Left cardiac atrium (tissue), 4 donors: ENCODE measurements at regions of chr4 and their contacts with region 1.

Region 1: GRCh38 chr4:185597532-185598188 is 62.4 kb upstream of the PDLIM3 start:
- DNase-seq: peak; percentile 82
- ATAC-seq: peak; percentile 60 to 66

Region 2: GRCh38 chr4:185425647-185426352 is 171.9 kb before region 1 on chr4 and contains the start of gene UFSP2:
- intact Hi-C with region 1: loop called in 1 of 2 experiments (anchors 10 kb)
- DNase-seq: peak; percentile 92
- ATAC-seq: peak; percentile 96 to 97
- total RNA-seq, gene UFSP2: 37.0 to 43.0 TPM

Region 3: DNA sequence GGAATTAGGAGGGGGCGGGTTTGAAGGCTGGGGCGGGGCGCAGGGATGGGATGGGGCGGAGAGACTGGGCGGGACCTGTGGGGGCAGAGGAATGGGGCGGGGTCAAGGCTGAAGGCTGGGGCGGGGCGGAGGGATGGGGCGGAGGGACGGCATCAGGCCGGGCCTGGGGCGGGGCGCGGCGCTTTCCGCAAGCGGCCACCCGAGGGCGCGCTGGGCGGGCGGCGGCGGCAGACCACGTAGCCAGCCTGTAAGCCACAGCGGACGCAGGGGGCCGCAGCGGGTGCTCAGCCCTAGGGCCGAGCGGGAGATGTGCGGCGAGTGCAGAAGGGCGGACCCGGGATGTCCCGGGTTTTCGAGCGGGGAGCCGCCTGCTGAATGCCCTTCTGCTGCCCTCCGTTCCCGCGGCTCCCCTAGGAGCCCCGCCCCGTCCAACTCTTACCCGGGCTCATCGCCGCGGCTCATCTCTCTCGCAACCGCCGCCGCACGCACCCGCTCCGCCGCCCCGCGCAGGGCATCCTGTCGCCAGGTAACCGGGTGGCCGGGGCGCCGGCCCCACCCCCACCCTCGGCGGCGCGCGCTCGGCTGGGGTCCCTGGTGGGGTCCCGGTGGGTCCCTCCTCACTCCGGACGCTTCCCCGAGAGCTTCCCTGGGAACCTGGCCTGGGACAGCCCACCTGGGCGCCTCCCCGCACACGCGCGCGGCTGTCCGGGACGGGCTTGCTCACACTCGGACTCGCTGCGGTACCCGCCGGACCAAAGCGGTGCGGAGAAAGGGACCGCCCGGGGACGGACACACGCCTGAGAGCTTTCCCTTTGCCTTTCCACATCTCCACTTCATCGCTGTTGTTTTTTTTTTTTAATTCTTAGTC is 126.2 kb before region 1 on chr4 and contains the start of gene CCDC110:
- intact Hi-C with region 1: loop called (anchors 5 kb)
- DNase-seq: peak; percentile 95
- ATAC-seq: peak; percentile 99
- total RNA-seq, gene CCDC110: 1.6 to 2.0 TPM

Region 4: DNA sequence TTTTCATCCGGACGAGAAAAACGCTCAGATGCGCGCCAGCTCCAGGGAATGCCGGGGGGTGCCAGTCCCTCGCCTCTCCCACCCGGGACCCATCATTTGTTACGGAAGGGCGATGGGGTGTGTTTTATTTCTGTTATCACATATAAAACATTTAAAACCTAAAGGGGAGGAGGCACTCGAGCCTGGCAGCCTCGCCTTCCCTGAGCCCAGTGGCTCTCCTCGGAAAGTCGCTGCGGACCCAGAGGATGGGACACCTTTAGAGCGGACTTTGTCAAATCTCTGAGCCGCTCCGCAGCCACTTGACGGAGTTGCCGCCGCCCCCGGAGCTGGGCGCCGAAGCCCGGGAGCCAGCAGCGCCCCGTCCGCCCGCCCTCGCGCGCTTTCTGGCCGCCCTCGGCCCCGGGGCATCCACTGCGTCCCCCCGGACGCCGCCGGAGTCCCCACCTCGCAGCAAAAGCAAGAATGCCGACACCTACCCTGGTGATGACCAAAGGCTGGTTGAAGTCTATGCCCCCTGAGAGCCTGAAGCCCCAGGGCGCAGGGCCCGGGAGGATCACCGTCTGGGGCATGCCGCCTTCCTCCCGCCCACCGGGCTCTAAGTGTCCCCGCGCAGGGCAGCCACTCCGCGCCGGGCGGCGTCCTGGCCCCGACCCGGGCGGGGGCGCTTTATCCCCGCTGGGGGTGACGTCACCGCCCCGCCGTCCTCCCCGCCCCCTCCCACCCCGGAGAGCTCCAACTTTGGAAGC is 62.6 kb before region 1 on chr4 and contains the start of gene PDLIM3:
- intact Hi-C with region 1: loop called (anchors 5 to 10 kb)
- DNase-seq: peak; percentile 86
- ATAC-seq: peak; percentile 88 to 90
- total RNA-seq, gene PDLIM3: 319 to 692 TPM

Region 5: DNA sequence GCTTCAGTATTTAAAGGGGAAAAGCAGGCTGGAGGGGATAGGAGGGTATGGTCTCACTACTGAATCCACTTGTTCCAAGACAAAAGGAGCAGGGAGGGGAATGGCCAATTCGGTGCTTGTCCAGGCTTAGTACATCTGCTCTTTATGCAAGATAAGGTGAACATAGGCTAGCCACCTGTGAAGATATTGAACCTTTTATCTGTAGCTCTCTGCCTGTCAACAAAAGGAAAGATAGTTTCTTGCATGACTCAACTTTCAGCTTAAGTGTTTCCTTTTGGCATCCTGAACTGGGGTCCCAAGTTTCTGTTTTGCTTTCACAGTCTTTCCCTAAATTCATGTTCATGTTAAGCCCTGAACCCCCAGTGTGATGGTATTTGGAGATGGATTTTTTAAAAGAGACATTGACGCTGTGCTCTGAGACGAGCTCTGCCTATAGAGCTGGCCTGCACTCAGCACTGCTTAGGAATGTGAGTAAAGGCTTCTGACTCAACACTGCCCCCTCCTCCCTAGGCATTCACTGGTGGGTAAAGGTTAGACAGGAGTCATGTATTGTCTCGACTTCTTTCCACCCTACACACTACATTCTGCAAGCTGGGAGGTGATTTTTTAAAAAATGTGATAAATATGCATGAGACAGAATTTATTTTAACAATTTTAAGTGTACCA is 535.0 kb after region 1 on chr4:
- intact Hi-C with region 1: no loop called
- DNase-seq: no peak
- ATAC-seq: peak in 1 of 2 donors; percentile 73